ENCODE measurements at regions of chr9 and their contacts with region 1.

Region 1: GRCh38 chr9:120985810-120986222 is 59.2 kb upstream of the TRAF1 start:
- DNase-seq: peak; percentile 13
- H3K4me3 Mint-ChIP-seq: no peak overlapping the region
- H3K27ac Mint-ChIP-seq: no peak overlapping the region
- H3K4me1 Mint-ChIP-seq: peaks cover 2% of the 10 kb centered on the region
- H3K27me3 Mint-ChIP-seq: no peaks in the 10 kb centered on the region

Region 2: GRCh38 chr9:120960001-120960400 is 25.8 kb before region 1 on chr9:
- CTCF ChIA-PET with region 1: interaction called, 13 read pairs
- intact Hi-C with region 1: no loop called
- DNase-seq: no peak
- H3K4me3 Mint-ChIP-seq: no peak overlapping the region
- H3K27ac Mint-ChIP-seq: no peak overlapping the region
- H3K4me1 Mint-ChIP-seq: no peaks in the 10 kb centered on the region
- H3K27me3 Mint-ChIP-seq: no peaks in the 10 kb centered on the region

Region 3: GRCh38 chr9:121059998-121060636 is 74.3 kb after region 1 on chr9:
- CTCF ChIA-PET with region 1: interaction called, 79 read pairs
- intact Hi-C with region 1: loop called (anchors 1 kb)
- DNase-seq: peak; percentile 44
- H3K4me3 Mint-ChIP-seq: no peak overlapping the region
- H3K27ac Mint-ChIP-seq: no peak overlapping the region
- H3K4me1 Mint-ChIP-seq: peaks cover 16% of the 10 kb centered on the region
- H3K27me3 Mint-ChIP-seq: no peaks in the 10 kb centered on the region

Region 4: DNA sequence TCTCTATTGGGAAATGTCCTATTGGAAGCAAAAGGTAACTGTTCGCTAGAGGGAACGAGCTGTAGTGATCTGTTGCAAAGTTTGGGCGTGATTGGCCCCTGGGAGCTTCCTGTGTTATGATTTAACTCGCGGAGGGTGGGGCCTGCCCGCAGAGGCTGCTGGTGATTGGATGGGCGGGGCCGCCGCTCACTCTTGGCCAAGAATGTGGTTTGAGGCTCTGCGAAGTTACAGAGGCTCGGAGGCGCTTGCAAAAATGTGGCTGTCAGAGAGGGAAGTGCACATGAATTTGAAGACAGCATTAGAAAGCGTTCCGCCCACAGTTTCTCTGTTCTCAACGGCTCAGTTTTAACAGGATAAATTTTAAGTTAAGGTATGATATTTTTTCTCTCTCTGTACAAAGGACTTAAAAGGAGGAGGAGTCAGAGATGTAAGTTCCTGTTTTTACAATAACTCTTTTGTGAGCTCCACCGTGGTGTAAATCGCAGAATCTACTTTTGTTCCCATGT is 135.8 kb after region 1 on chr9:
- CTCF ChIA-PET with region 1: interaction called, 3 read pairs
- intact Hi-C with region 1: loop called (anchors 5 kb)
- DNase-seq: peak; percentile 99
- H3K4me3 Mint-ChIP-seq: peak overlapping the region; percentile 73
- H3K27ac Mint-ChIP-seq: peak overlapping the region; percentile 91
- H3K4me1 Mint-ChIP-seq: peaks cover 44% of the 10 kb centered on the region
- H3K27me3 Mint-ChIP-seq: no peaks in the 10 kb centered on the region

Region 5: DNA sequence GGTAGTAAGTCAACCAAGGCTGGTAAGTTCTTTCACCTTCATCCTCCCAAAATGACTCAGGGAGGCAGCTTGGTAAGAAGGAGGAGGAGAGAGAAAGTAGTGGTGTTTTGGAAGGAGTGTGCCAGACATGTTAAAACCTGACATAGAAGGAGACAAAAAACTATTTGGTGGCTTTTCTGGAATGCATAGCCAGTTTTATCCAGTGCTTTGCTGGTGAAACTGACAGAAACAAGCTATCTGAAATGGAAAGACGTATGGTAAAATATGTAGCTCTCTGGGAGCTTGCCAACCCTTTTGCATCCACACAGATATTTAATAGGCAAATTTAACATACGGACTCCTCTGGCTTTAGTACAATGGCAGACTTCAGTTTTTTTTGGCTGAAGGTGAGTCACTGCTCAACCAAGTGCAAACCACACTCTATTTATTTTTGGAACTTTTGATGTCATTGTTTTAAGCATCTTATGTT is 170.5 kb after region 1 on chr9:
- CTCF ChIA-PET with region 1: no interaction called
- intact Hi-C with region 1: loop called (anchors 10 kb)
- DNase-seq: peak; percentile 26
- H3K4me3 Mint-ChIP-seq: no peak overlapping the region
- H3K27ac Mint-ChIP-seq: peak overlapping the region; percentile 87
- H3K4me1 Mint-ChIP-seq: peaks cover 31% of the 10 kb centered on the region
- H3K27me3 Mint-ChIP-seq: no peaks in the 10 kb centered on the region

Region 6: DNA sequence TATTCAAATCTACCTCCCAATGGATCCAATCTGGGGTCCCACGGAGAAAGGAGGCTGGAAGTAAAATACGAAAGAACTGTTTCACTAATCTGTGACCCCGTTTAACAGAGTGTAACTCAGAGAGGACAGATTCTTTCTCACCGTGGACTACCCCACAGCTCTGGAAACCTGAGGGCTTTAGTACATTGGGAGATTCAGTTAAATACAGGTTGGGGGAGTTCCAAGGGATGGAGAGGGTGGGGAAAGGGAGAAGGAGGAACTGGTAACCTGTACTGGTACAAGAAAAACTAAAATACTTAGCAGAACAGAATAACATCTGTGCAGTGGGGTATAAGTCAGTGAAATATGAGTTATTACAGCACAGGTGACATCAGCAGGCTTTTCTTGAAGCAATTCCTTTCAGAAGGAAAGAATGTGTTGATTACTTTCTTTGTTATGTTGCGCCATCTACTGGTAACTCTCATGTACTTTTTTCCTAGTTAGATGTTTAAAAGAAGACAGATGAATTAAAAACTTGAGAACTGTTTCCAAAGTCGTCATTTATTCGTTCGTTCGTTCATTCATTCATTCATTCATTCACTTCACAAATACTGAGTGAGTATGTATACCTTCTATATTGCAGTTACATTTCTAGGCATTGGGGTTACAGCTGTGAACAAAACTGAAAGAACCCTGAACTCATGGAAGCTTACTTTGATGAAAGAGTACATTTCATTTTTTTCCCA is 414.2 kb after region 1 on chr9:
- CTCF ChIA-PET with region 1: interaction called, 4 read pairs
- intact Hi-C with region 1: loop called (anchors 10 kb)
- DNase-seq: no peak
- H3K4me3 Mint-ChIP-seq: no peak overlapping the region
- H3K27ac Mint-ChIP-seq: no peak overlapping the region
- H3K4me1 Mint-ChIP-seq: no peaks in the 10 kb centered on the region
- H3K27me3 Mint-ChIP-seq: no peaks in the 10 kb centered on the region

Measured in activated naive CD4-positive, alpha-beta T cell treated with anti-CD3 and anti-CD28 coated beads for 36 hours (primary cell).